Heart left ventricle (tissue), 16 donors: ENCODE measurements at regions of chr13 and their contacts with region 1.

Region 1: GRCh38 chr13:44557986-44558385 is 18.1 kb downstream of the TSC22D1 start:
- DNase-seq: no peak
- ATAC-seq: no peak
- H3K4me3 ChIP-seq: no peak overlapping the region
- H3K27ac ChIP-seq: no peak overlapping the region
- H3K4me1 ChIP-seq: peaks cover 0 to 2% (median 0%) of the 10 kb centered on the region in 12 donors
- H3K27me3 ChIP-seq: no peaks in the 10 kb centered on the region
- CTCF ChIP-seq: no peak
- POLR2A ChIP-seq: no peak

Region 2: DNA sequence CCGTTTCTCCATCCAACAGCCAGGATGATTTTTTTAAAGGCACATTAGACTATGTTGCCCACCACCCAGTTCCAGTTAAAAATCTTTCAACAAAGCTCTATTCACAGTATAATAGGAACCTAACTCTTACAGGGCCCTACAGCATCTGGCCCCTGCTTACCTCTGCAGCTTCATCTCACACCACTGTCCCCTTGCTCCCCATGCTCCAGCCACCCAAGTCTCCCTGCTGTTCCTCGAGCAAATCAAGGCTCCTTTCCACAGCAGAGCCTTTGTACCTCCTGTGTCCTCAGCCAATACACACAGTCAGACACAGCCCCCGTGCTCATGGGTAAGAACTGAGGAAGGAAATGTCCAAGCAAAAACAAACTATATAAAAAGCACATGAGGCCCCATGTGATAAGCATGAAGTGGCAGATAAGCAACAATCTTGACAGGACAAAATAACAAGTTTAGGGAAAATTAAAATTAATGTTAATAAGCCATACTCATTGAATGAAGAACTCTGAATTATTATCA is 49.4 kb before region 1 on chr13:
- intact Hi-C with region 1: loop called in 1 of 10 experiments (anchors 10 kb)
- DNase-seq: no peak
- ATAC-seq: peak in 1 of 4 donors; percentile 18
- H3K4me3 ChIP-seq: no peak overlapping the region
- H3K27ac ChIP-seq: no peak overlapping the region
- H3K4me1 ChIP-seq: peaks cover 0 to 7% (median 0%) of the 10 kb centered on the region in 12 donors
- H3K27me3 ChIP-seq: no peaks in the 10 kb centered on the region
- CTCF ChIP-seq: no peak
- POLR2A ChIP-seq: no peak

Region 3: GRCh38 chr13:44726214-44726613 is 168.2 kb after region 1 on chr13:
- intact Hi-C with region 1: no loop called
- DNase-seq: no peak
- ATAC-seq: no peak
- H3K4me3 ChIP-seq: no peak overlapping the region
- H3K27ac ChIP-seq: no peak overlapping the region
- H3K4me1 ChIP-seq: peaks cover 0 to 3% (median 0%) of the 10 kb centered on the region in 12 donors
- H3K27me3 ChIP-seq: no peaks in the 10 kb centered on the region
- CTCF ChIP-seq: no peak
- POLR2A ChIP-seq: no peak